Activated CD4-positive, alpha-beta T cell treated with anti-CD3 and anti-CD28 coated beads for 36 hours (primary cell): ENCODE measurements at regions of chr5 and their contacts with region 1.

Region 1: GRCh38 chr5:179142434-179143198 is 82.4 kb downstream of the ZNF354C start:
- DNase-seq: peak; percentile 67
- ATAC-seq: peak; percentile 87
- H3K4me3 Mint-ChIP-seq: no peak overlapping the region
- H3K27ac Mint-ChIP-seq: peak overlapping the region; percentile 88
- H3K4me1 Mint-ChIP-seq: peaks cover 37% of the 10 kb centered on the region
- H3K27me3 Mint-ChIP-seq: no peaks in the 10 kb centered on the region

Region 2: GRCh38 chr5:178232124-178232919 is 910.3 kb before region 1 on chr5 and contains the start of gene PHYKPL:
- CTCF ChIA-PET with region 1: no interaction called
- POLR2A ChIA-PET with region 1: no interaction called
- intact Hi-C with region 1: loop called in 1 of 2 experiments (anchors 10 kb)
- DNase-seq: peak; percentile 81
- ATAC-seq: peak; percentile 70
- H3K4me3 Mint-ChIP-seq: peak within 1 kb of the TSS; percentile 80
- H3K27ac Mint-ChIP-seq: peak within 1 kb of the TSS; percentile 84
- H3K4me1 Mint-ChIP-seq: peaks cover 56% of the 10 kb centered on the region
- H3K27me3 Mint-ChIP-seq: no peaks in the 10 kb centered on the region
- total RNA-seq, gene PHYKPL: 67.2 to 68.4 TPM

Region 3: DNA sequence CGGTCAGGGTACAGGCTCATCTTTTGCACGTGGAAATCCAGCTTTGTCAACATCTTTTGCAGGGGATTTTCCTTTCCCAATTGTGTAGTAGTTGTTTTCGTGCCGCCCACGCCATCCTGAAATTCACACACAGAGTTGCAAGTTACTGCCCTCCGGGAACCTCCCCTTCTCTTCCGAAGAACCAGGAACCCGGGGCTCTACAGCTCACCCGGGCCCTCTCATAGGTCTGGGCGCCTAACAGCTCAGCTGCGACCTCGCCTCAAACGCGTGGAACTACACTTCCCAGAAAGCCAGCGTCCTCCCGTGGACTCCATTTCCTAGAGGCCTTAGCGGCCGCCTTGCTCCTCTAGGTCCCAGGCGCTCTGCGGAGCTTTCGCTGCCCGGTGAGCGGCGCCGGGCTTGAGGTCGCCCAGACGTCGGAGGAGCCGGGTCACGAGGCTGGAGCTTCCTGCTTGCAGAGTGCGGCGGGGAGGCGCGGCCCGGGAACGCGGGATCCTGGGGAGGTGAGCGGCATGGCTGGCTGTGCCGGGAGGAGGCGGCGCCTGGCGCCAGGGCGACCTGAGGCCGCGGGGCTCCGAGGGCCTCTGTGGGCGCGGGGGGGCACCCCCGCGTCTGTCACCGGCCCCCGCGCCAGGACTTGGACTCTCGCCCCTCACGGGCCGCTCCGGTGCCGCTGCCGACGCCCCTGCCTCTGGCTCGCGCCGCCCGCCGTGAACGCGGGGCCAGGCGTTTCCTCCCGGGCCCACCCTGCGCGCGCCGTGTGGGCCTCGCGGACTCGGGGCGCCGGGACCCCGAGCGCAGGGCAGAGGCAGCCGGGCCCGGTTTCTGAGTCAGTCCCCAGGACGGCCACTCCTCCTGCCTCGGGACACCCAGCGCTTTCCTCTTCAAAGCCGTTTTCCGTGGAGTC is 282.7 kb before region 1 on chr5 and contains the start of gene ZNF354B:
- CTCF ChIA-PET with region 1: no interaction called
- POLR2A ChIA-PET with region 1: interaction called, 3 read pairs
- intact Hi-C with region 1: loop called in 1 of 2 experiments (anchors 5 kb)
- DNase-seq: peak; percentile 93
- ATAC-seq: peak; percentile 100
- H3K4me3 Mint-ChIP-seq: peak within 1 kb of the TSS; percentile 79
- H3K27ac Mint-ChIP-seq: peak within 1 kb of the TSS; percentile 89
- H3K4me1 Mint-ChIP-seq: peaks cover 24% of the 10 kb centered on the region
- H3K27me3 Mint-ChIP-seq: no peaks in the 10 kb centered on the region
- total RNA-seq, gene ZNF354B: 10.8 to 11.9 TPM

Region 4: DNA sequence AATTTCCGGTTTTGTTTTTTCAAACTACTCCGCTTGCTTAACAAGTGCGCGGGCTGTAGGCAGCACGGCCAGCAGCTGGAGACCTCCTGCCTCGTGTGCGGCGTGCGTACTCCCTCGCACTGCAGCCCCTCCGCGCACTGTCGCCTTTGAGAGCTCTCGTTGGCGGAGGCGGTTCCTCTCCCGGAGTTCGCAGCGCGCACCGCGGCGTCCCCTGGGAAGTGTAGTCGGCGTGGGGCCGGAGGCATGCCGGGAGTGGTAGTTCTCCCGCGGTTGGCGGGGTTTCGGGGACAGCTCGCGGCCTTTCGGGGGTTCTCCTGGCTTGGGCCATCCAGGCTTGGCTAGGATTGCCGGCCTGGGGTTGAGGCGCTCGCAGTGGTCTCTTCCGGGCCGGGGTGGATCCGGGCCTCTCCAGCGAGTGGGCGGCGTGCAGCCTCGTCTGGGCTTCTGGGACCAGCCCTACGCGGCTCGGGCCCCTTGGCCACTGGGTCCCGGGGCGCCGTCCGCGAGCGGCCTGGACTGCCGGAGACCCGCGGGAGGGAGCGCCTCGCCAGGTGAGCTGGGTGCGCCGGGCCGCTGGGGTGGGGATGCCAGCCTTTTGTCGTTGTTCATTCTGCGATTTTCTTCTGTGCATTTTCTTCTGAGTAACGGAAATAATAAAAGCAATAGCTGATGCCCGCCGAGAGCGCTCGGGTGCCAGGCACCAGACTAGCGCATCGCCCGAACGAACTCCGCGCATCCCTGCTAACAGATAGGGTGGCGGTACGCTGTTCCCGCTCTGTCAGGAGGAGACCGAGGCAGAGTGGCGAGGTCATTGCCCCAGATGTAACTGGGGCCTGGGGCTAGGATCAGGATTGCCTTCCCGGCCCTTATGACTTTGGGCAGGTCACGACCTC is 82.3 kb before region 1 on chr5 and contains the start of gene ZNF354C:
- CTCF ChIA-PET with region 1: no interaction called
- POLR2A ChIA-PET with region 1: interaction called, 4 read pairs
- intact Hi-C with region 1: loop called in 1 of 2 experiments (anchors 1 kb)
- DNase-seq: peak; percentile 93
- ATAC-seq: peak; percentile 99
- H3K4me3 Mint-ChIP-seq: peak within 1 kb of the TSS; percentile 81
- H3K27ac Mint-ChIP-seq: peak within 1 kb of the TSS; percentile 90
- H3K4me1 Mint-ChIP-seq: peaks cover 16% of the 10 kb centered on the region
- H3K27me3 Mint-ChIP-seq: no peaks in the 10 kb centered on the region
- total RNA-seq, gene ZNF354C: 7.1 to 7.2 TPM

Region 5: DNA sequence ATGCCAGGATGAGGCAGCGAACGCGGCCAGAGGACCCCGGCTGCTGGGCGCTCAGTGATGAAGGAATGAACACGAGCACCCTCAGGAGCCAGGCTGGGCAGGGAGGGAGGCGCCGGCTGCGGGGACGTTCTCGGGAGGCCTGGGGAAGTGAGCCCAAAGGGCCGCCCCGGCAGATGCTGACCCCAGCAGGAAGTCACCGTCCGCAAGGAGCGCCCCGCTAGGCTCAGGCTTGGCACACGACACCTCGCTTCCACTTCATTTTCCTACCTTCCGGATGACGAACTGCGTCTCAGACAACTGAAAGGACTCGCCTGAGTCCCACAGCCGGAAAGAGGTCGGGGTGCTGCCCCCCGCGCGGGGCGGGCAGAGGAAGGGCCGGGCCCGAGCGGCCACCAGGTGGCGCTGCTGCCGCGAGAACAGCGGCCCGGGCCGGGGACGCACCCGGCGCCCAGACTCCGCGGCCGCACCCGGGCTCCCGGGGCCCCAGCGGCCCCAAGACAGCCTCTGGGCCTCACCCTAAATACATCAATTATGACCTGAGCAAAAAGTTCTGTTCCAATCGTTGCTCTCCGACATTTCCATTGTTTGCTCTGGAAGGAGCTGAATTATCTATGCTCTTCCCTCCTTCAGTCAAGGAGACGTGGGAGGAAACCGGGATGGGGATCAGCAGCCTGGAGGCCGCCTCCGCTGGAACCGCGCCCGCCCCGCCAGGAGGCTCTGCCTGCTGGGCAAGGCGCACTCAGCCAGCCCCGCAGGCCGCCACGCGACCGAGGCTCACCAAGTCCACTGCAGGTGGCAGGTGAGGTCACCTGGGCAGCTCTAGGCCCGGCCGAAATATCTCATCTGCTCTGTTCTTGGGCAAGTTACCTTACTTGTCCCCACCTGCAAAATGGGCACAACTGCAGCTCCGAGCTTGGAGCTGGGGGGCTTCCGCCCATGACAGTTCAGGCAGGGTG is 24.5 kb after region 1 on chr5:
- CTCF ChIA-PET with region 1: interaction called, 5 read pairs
- POLR2A ChIA-PET with region 1: no interaction called
- intact Hi-C with region 1: loop called in 1 of 2 experiments (anchors 1 kb)
- DNase-seq: peak; percentile 85
- ATAC-seq: peak; percentile 95
- H3K4me3 Mint-ChIP-seq: no peak overlapping the region
- H3K27ac Mint-ChIP-seq: no peak overlapping the region
- H3K4me1 Mint-ChIP-seq: no peaks in the 10 kb centered on the region
- H3K27me3 Mint-ChIP-seq: peaks cover 4% of the 10 kb centered on the region

Region 6: GRCh38 chr5:179550511-179551230 is 408.1 kb after region 1 on chr5 and contains the start of gene RUFY1:
- CTCF ChIA-PET with region 1: no interaction called
- POLR2A ChIA-PET with region 1: no interaction called
- intact Hi-C with region 1: loop called in 1 of 2 experiments (anchors 5 kb)
- DNase-seq: peak; percentile 89
- ATAC-seq: peak; percentile 80
- H3K4me3 Mint-ChIP-seq: peak within 1 kb of the TSS; percentile 96
- H3K27ac Mint-ChIP-seq: peak within 1 kb of the TSS; percentile 99
- H3K4me1 Mint-ChIP-seq: peaks cover 37% of the 10 kb centered on the region
- H3K27me3 Mint-ChIP-seq: no peaks in the 10 kb centered on the region
- total RNA-seq, gene RUFY1: 29.6 to 33.8 TPM